ENCODE measurements at regions of chr18 and their contacts with region 1.

Region 1: GRCh38 chr18:24600076-24600654 is 139.7 kb downstream of the HRH4 start:
- DNase-seq: no peak
- ATAC-seq: peak; percentile 51

Region 2: DNA sequence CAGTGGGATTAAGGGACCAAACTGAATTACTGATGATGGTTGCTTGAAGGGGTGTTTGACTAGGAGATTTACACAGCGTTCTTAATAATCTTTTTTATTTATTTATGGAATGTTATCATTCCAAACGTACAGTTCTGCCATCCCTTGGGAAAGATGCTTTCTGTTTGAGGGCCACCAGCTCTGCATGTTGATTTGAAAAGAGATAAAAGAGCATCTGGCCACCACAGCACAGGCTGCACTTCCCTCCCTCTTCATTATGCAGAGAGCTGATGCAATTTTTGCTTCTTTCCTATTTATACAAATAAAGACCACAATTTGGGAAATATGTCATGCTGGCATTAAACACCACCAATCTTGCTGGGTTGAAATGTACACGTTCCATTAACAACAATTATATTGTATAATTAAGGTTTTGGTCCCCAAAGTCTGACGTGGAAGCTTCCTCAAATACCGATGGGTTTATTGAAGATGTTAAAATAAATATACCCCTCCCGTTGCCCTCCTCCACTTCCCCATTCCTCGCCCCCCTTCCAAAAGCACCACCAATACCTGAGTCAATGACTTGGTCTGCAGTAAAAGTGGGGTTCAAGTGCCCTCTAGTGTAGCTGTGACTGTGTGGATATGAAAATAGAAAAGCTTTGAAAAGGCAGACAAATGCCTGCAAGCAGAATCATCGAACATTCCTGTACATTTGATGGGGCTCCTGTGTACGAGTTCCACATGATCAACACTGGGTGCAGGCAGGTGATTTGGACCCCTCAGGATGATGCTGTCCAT is 72.2 kb after region 1 on chr18:
- intact Hi-C with region 1: loop called (anchors 10 kb)
- DNase-seq: no peak
- ATAC-seq: no peak

Region 3: DNA sequence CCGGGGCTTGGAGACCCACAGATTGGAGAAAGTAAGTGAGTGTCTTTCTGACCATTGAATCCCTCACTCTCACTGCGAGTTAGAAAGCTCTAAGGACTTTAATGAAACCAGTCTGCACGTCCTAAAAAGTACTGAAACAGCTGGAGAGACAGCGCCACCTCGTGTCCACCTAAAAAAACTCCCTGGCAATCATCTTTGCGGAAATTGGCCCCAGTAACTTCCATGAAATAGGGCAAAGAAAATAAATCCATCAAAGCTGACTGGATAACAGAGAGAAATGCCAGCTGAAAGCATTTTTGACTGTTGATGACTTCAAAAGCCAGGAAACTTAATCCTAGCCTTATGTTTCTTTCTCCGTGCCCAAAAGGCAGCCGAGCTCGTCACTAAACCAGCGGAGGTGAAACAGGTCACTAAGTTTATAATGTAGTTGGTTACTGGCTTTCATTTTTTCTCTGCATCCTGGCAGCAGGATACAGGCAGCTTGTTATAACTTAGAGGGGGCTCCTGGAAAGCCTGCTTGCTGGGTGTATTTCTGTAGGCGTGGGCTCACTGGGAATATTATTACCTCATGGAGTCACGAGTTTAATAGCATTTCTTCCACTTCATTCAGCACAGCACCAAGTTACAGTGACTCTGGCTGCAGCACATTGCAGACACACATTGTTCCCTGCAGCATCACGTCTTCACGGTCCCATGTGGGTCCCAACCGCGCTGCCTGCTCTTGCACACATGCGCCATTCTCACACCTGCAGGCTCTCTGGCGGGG is 126.7 kb after region 1 on chr18:
- intact Hi-C with region 1: loop called (anchors 2 kb)
- DNase-seq: peak; percentile 48
- ATAC-seq: peak; percentile 84